Heart left ventricle (tissue), 16 donors: ENCODE measurements at regions of chr7 and their contacts with region 1.

Region 1: DNA sequence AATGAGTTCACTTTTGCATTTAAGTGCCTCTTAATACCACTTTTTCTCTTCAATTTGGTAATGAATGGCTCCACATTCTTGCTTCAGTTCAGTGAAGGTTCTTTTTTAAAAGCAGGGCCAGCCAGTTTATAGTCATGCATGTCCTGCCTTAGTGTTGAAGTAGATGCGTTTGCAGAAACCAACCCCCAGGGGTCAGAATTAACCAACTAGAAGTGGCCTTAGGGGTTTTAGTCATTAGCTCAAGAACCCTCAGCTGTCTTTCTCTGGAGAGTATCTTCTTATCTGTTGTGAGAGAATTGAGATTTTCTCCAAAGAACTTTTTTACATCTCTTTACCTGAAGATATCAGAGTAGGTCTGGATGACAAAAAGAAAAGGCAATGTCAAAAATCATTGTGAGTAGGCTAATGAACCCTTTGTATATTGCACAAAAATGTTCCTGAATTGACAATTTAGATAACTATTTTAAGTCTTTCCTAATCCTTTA is 82.2 kb downstream of the PIK3CG start:
- DNase-seq: peak in 4 of 5 donors; percentile 30 to 55 (median 42)
- ATAC-seq: peak; percentile 67 to 90 (median 86)
- H3K4me3 ChIP-seq: no peak overlapping the region
- H3K27ac ChIP-seq: no peak overlapping the region
- H3K4me1 ChIP-seq: peaks cover 0 to 2% (median 0%) of the 10 kb centered on the region in 12 donors
- H3K27me3 ChIP-seq: no peaks in the 10 kb centered on the region
- CTCF ChIP-seq: peak; percentile 54 to 82 (median 72)
- POLR2A ChIP-seq: no peak

Region 2: GRCh38 chr7:106793015-106793975 is 154.0 kb before region 1 on chr7:
- intact Hi-C with region 1: loop called in 8 of 10 experiments (anchors 5 to 10 kb)
- DNase-seq: no peak
- ATAC-seq: no peak
- H3K4me3 ChIP-seq: no peak overlapping the region
- H3K27ac ChIP-seq: no peak overlapping the region
- H3K4me1 ChIP-seq: no peaks in the 10 kb centered on the region
- H3K27me3 ChIP-seq: no peaks in the 10 kb centered on the region
- CTCF ChIP-seq: peak; percentile 46 to 73 (median 62)
- POLR2A ChIP-seq: no peak

Region 3: GRCh38 chr7:107044347-107045194 is 97.3 kb after region 1 on chr7 and contains the start of gene PRKAR2B:
- intact Hi-C with region 1: loop called in 2 of 10 experiments (anchors 5 kb)
- DNase-seq: peak; percentile 79 to 88 (median 84)
- ATAC-seq: peak; percentile 89 to 98 (median 96)
- H3K4me3 ChIP-seq: peak within 1 kb of the TSS; percentile 65 to 96 (median 86)
- H3K27ac ChIP-seq: peak within 1 kb of the TSS; percentile 59 to 93 (median 77)
- H3K4me1 ChIP-seq: peaks cover 0 to 20% (median 13%) of the 10 kb centered on the region in 12 donors
- H3K27me3 ChIP-seq: no peaks in the 10 kb centered on the region
- CTCF ChIP-seq: peak in 6 of 12 donors; percentile 5 to 32 (median 18)
- POLR2A ChIP-seq: no peak
- total RNA-seq, gene PRKAR2B: 14.3 to 50.6 (median 18.9) TPM